Heart left ventricle (tissue), 16 donors: ENCODE measurements at regions of chr4 and their contacts with region 1.

Region 1: DNA sequence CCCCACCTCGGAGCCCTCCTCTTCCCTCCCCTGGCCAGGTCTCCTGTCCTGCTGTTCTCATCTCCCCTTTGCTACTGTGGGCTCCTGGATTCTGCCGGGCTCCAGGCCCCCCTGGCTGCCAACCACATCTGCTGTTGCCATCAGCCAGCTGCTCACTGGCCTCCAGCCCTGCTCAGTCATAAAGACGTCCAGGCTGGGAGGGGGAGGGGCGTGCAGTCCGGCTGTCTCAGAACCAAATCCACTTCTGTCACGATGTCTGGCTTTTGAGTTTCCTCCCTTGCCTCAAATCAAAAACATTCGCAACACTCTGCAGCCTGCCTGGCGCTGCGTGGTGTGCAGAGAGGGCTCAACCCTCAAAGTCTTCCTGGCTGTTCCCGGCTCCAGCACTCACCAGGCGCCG is 7.1 kb downstream of the RASL11B start:
- DNase-seq: peak; percentile 74 to 86 (median 81)
- ATAC-seq: peak; percentile 34 to 69 (median 55)
- H3K4me3 ChIP-seq: peak overlapping the region in 1 of 12 donors; percentile 6
- H3K27ac ChIP-seq: peak overlapping the region in 10 of 12 donors; percentile 34 to 81 (median 58)
- H3K4me1 ChIP-seq: peaks cover 0 to 76% (median 47%) of the 10 kb centered on the region in 12 donors
- H3K27me3 ChIP-seq: no peaks in the 10 kb centered on the region
- CTCF ChIP-seq: no peak
- POLR2A ChIP-seq: no peak

Region 2: DNA sequence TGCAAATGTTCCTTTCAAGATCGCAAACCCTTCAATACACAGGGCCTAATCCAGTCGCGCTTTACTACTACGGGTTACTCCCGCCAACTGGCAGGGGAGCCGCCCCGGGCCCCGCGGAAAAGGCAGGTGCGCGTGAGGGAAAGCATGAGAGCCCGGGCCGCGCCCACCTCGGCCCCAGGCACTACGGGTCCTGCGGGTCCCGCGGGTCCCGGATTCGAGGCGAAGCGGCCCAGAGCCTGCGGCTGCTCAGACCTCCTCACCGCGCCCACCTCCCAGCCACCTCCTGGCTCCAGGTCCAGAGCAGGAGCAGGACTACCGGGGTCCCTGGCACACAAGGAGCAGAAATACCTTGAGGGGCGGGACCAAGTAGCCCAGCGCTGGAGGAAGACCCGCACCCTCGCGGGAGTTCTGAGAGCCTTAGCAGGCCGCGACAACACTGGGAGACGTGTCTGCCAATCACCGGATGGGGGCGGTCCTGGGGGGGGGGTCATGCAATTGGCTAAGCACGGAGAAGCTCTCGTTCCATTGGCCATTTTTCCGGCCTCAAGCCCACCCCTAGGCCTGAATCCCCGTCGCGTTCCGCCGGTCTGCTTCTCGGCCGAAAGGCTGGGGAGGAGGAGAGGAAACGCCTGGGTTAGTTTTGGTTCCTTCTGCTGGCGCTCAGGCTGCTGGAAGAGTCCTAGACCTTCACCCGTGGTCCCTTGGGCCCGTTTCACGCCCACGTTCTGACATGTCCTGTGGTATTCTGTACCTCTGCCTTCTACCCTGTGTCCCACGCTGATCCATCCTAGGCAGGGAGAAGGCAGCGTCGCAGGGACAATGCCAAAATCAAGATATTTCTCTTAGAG is 147.0 kb before region 1 on chr4:
- intact Hi-C with region 1: loop called in 8 of 10 experiments (anchors 5 to 10 kb)
- DNase-seq: peak; percentile 95 to 97 (median 95)
- ATAC-seq: peak; percentile 98 to 99 (median 98)
- H3K4me3 ChIP-seq: peak overlapping the region; percentile 62 to 96 (median 78)
- H3K27ac ChIP-seq: peak overlapping the region; percentile 80 to 97 (median 92)
- H3K4me1 ChIP-seq: peaks cover 0 to 16% (median 2%) of the 10 kb centered on the region in 12 donors
- H3K27me3 ChIP-seq: no peaks in the 10 kb centered on the region
- CTCF ChIP-seq: peak in 3 of 12 donors; percentile 9 to 32 (median 13)
- POLR2A ChIP-seq: peak in 1 of 2 donors; percentile 80

Region 3: DNA sequence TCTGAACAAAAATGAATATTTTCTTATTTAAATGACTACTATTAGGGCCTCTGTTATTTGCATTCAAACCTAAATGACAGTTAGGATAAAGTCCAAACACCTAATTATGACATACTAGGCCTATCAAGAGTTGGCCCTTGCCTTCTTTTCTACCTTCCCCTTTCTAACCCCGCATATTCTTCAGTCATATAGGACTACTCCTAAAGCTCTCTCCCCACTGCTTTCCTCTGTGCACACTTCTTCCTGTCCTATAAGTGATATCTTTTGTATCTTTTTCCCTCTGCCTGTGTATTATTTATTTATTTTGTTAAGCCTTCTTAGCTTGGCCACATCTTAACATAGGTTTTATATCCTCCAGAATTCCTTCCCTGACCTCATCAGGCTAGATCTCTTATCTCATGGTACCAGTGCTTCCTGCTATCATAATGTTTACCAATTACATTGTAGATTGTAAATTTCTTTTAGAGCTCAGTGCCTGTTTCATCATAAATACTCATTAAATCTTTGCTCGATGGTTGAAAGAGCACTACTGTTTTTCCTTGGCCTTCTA is 140.4 kb before region 1 on chr4:
- intact Hi-C with region 1: loop called in 6 of 10 experiments (anchors 5 to 10 kb)
- DNase-seq: no peak
- ATAC-seq: no peak
- H3K4me3 ChIP-seq: no peak overlapping the region
- H3K27ac ChIP-seq: no peak overlapping the region
- H3K4me1 ChIP-seq: no peaks in the 10 kb centered on the region
- H3K27me3 ChIP-seq: no peaks in the 10 kb centered on the region
- CTCF ChIP-seq: no peak
- POLR2A ChIP-seq: no peak

Region 4: DNA sequence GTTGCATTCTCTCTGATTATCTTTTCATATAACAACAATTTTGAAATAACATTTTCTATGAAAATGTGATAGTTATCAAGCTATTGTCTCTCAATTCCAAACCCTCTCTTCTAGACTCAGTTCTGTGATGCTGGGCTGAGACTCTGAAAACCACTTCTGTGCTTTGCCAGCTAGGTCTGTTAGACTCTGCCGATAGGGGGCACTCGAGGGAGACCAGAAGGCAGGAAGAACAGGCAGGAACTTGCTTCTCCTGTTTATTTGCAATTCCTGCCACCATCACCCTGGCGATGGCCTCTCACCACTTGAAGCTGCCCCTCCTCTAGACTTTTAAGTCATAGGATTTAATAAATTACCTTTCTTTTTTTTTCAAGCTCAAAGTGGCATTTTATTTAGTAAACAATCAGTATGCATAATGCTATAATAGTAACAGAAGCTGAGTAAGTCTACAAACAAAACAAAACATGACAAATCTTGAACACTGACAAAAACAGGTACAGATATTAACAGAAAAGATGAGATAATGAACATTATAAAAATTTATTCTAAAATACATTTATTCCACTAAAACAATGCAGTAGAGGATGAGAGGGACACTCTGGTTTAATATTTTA is 42.6 kb after region 1 on chr4:
- intact Hi-C with region 1: loop called in 1 of 10 experiments (anchors 5 kb)
- DNase-seq: peak; percentile 65 to 83 (median 72)
- ATAC-seq: peak in 3 of 4 donors; percentile 61 to 68 (median 64)
- H3K4me3 ChIP-seq: no peak overlapping the region
- H3K27ac ChIP-seq: no peak overlapping the region
- H3K4me1 ChIP-seq: peaks cover 0 to 27% (median 12%) of the 10 kb centered on the region in 12 donors
- H3K27me3 ChIP-seq: no peaks in the 10 kb centered on the region
- CTCF ChIP-seq: peak; percentile 61 to 79 (median 74)
- POLR2A ChIP-seq: no peak

Region 5: DNA sequence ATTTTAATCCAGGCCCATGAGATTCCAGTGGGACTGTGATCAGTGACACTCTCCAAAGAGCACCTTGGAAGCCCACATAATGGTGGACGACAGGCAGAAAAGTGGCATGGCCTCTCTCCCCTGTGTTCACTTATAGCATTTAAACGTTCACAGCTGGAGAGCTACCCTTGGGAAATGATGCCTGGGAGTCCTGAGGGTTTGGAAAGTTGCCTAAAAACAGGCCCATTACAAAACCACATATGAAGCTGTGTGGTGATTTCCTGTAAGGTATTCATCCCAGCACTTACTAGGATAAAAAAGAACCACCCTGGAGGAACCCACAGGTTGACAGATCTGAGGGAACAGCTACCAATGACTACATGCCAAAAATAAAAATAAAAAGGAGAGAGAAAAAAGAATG is 186.1 kb after region 1 on chr4:
- intact Hi-C with region 1: no loop called
- DNase-seq: no peak
- ATAC-seq: no peak
- H3K4me3 ChIP-seq: no peak overlapping the region
- H3K27ac ChIP-seq: peak overlapping the region in 1 of 12 donors; percentile 16
- H3K4me1 ChIP-seq: peaks cover 0 to 20% (median 5%) of the 10 kb centered on the region in 12 donors
- H3K27me3 ChIP-seq: no peaks in the 10 kb centered on the region
- CTCF ChIP-seq: no peak
- POLR2A ChIP-seq: no peak